ENCODE measurements at regions of chr16 and their contacts with region 1.

Region 1: GRCh38 chr16:22270525-22270924 is 26.7 kb upstream of the POLR3E start:
- DNase-seq: no peak
- ATAC-seq: no peak
- H3K4me3 ChIP-seq: no peak overlapping the region
- H3K27ac ChIP-seq: no peak overlapping the region
- H3K4me1 ChIP-seq: no peaks in the 10 kb centered on the region
- H3K27me3 ChIP-seq: no peaks in the 10 kb centered on the region
- CTCF ChIP-seq: no peak
- POLR2A ChIP-seq: no peak
- RAD21 ChIP-seq: no peak

Region 2: DNA sequence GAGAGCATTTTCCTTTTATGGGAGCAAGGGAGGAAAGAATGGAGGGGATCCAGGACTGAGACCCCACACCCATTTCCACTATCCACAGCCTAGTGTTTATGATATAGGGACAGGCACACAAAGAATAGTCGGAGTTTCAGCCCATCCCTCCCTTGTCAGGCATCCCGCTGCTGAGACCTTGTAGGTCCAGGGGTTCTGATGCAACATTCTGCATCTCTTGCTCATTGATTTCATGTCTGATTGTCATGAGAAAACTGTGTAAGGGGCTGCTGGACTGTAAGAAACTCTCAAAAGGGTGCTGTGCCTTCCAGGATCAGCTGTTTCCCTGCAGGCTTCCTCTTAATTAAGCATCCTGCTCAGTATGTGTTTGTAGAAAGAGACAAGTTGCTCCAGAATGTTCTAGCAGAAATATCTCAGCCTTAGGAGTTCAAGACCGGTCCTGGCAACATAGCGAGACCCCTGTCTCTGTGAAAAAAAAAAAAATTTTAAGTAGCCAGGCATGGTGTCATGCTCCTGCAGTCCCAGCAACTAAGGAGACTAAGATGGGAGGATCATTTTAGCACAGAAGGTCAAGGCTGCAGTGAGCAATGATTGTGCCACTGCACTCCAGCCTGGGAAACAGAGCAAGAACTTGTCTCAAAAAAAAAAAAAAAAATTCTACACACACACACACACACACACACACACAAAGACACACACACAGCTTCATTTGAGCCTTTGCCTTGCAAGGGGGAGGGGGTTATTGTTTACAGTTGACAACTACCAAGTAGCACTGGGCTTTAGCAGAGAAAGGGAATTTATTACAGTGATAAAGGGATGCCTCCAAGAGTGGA is 21.6 kb after region 1 on chr16:
- CTCF ChIA-PET with region 1: no interaction called
- POLR2A ChIA-PET with region 1: no interaction called
- RAD21 ChIA-PET with region 1: no interaction called
- intact Hi-C with region 1: loop called (anchors 2 kb)
- DNase-seq: no peak
- ATAC-seq: no peak
- H3K4me3 ChIP-seq: no peak overlapping the region
- H3K27ac ChIP-seq: no peak overlapping the region
- H3K4me1 ChIP-seq: peaks cover 6 to 11% of the 10 kb centered on the region in 2 experiments; a peak in 3 of 4 replicates
- H3K27me3 ChIP-seq: no peaks in the 10 kb centered on the region
- CTCF ChIP-seq: no peak
- POLR2A ChIP-seq: no peak
- RAD21 ChIP-seq: no peak